ENCODE measurements at regions of chr16 and their contacts with region 1.

Region 1: GRCh38 chr16:70679666-70680494 is 6.0 kb downstream of the MTSS2 start:
- DNase-seq: peak; percentile 76
- H3K4me3 ChIP-seq: no peak overlapping the region
- H3K27ac ChIP-seq: no peak overlapping the region
- H3K4me1 ChIP-seq: peaks cover 11% of the 10 kb centered on the region
- H3K27me3 ChIP-seq: no peaks in the 10 kb centered on the region
- CTCF ChIP-seq: peak; percentile 47

Region 2: DNA sequence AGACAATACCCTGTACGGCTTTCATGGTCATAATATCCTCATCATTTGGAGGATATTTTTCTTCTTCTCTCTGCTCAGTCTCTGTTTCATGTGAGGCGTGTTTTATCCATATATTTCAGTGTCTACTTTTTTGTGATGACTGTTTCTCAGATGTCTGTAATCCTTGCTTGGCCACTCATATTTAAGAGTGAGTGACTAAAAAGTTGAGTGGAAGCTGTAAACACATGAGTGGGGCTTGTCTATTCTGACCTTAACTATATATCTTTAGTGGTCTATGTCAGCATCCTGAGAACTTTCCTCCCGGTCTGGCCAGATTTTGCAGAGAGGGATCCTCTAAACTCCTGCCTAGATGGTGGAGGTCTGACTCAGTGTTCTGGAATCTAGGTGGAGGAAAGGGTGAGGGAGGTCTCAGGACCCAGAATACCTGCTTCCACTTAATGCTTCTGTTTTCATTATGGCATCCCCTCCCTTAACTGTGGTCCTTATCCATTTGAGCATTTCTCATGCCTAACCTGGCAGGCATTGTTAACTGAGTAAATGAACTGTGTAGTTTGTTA is 374.9 kb before region 1 on chr16:
- CTCF ChIA-PET with region 1: no interaction called
- POLR2A ChIA-PET with region 1: no interaction called
- intact Hi-C with region 1: no loop called
- DNase-seq: no peak
- H3K4me3 ChIP-seq: no peak overlapping the region
- H3K27ac ChIP-seq: no peak overlapping the region
- H3K4me1 ChIP-seq: no peaks in the 10 kb centered on the region
- H3K27me3 ChIP-seq: no peaks in the 10 kb centered on the region
- CTCF ChIP-seq: no peak

Region 3: DNA sequence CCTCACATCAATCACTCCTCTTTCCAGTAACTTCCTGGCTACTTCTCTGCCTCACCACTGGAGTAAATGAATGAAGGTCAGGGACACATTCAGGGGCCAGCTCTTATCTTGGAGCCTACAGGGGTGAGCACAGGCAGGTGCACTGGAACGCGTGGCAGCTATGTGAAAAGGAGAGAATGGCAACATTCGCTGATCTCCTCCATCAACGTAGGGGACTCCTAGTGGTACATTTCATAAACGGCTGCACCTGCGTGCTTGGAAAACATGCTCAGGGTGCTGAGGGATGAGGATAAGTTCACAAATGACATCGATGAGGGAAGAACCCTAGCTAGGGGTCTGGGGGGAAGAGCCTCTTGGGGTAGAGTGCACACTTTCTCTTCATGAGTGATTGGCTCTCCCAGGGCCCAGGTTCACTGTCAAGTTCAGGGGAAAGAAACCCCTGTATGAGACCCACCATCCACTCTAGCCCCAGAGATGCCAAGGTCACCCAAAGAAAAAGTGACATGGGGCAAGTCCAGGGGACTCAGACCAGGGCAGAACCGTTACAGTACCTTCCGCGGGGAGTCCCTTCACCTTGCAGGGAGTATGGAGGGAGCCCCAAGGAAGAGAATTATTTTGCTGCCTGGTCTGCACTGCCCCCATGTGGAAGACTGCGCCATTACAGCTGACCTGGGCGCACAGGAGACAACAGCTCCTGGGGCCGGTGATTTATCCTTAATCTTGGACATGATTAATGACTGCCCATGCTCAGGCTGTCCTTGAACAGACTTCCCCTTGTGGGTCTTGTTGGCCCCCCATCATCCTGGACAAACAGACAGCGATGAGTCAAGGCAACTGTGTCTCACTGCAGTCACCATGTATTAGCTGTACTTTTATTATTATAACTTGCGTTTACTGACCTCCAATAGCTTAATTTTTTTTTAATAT is 91.0 kb after region 1 on chr16:
- CTCF ChIA-PET with region 1: interaction called, 21 read pairs
- POLR2A ChIA-PET with region 1: no interaction called
- intact Hi-C with region 1: loop called (anchors 2 kb)
- DNase-seq: peak; percentile 64
- H3K4me3 ChIP-seq: no peak overlapping the region
- H3K27ac ChIP-seq: no peak overlapping the region
- H3K4me1 ChIP-seq: no peaks in the 10 kb centered on the region
- H3K27me3 ChIP-seq: no peaks in the 10 kb centered on the region
- CTCF ChIP-seq: peak; percentile 95